Heart left ventricle (tissue), 16 donors: ENCODE measurements at regions of chr15 and their contacts with region 1.

Region 1: GRCh38 chr15:42267286-42267685 is 5.7 kb upstream of the GANC start:
- DNase-seq: no peak
- ATAC-seq: no peak
- H3K4me3 ChIP-seq: no peak overlapping the region
- H3K27ac ChIP-seq: no peak overlapping the region
- H3K4me1 ChIP-seq: peaks cover 0 to 27% (median 18%) of the 10 kb centered on the region in 12 donors
- H3K27me3 ChIP-seq: no peaks in the 10 kb centered on the region
- CTCF ChIP-seq: no peak
- POLR2A ChIP-seq: no peak

Region 2: GRCh38 chr15:42210696-42211095 is 56.6 kb before region 1 on chr15:
- intact Hi-C with region 1: loop called in 1 of 10 experiments (anchors 5 kb)
- DNase-seq: no peak
- ATAC-seq: no peak
- H3K4me3 ChIP-seq: no peak overlapping the region
- H3K27ac ChIP-seq: no peak overlapping the region
- H3K4me1 ChIP-seq: peaks cover 0 to 24% (median 18%) of the 10 kb centered on the region in 12 donors
- H3K27me3 ChIP-seq: no peaks in the 10 kb centered on the region
- CTCF ChIP-seq: no peak
- POLR2A ChIP-seq: no peak